Activated CD4-positive, alpha-beta T cell treated with anti-CD3 and anti-CD28 coated beads, Interleukin-2, amount 10 ng/mL, durations not matched to agents 24 days and 14 days (primary cell): ENCODE measurements at regions of chr3 and their contacts with region 1.

Region 1: GRCh38 chr3:134485718-134486576 is at the starts of genes ANAPC13 and CEP63:
- DNase-seq: peak; percentile 97
- H3K4me3 Mint-ChIP-seq: peak within 1 kb of the TSS; percentile 85
- H3K27ac Mint-ChIP-seq: peak within 1 kb of the TSS; percentile 98
- H3K4me1 Mint-ChIP-seq: peaks cover 38% of the 10 kb centered on the region
- H3K27me3 Mint-ChIP-seq: no peaks in the 10 kb centered on the region
- total RNA-seq, gene ANAPC13: 29.7 and 30.0 TPM in 2 replicates
- total RNA-seq, gene CEP63: 18.6 and 20.5 TPM in 2 replicates

Region 2: DNA sequence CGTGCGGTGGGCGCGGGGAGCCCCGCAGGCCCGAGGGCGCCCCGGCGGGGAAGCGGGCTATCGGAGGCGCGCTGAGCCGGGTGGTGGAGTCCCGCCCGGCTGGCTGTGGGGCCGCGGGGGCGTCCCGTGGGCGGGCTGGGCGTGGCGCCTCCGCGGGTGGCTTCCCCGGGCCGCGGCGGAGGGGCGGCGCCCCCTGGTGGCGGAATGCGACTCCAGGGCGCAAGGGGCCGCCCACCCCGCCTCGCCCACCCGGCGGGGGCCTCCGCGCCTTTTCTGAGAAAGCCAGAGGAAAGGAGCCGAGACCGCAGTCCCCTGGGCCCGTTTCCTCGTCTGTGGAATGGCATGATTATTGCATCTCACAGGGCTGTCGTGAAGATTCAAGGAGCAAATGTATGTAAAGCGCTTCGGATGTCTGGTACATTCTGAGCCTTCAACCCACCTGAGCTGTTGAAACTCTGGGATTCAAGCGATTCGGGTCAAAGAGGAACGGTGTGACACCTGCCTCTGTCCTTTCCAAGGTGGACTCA is 558.3 kb before region 1 on chr3:
- intact Hi-C with region 1: loop called (anchors 10 kb)
- DNase-seq: peak; percentile 92
- H3K4me3 Mint-ChIP-seq: peak overlapping the region; percentile 64
- H3K27ac Mint-ChIP-seq: no peak overlapping the region
- H3K4me1 Mint-ChIP-seq: peaks cover 5% of the 10 kb centered on the region
- H3K27me3 Mint-ChIP-seq: peaks cover 33% of the 10 kb centered on the region

Region 3: GRCh38 chr3:134250717-134251220 is 235.2 kb before region 1 on chr3 and contains the start of gene RYK:
- intact Hi-C with region 1: loop called (anchors 1 kb)
- DNase-seq: peak; percentile 93
- H3K4me3 Mint-ChIP-seq: peak within 1 kb of the TSS; percentile 90
- H3K27ac Mint-ChIP-seq: peak within 1 kb of the TSS; percentile 93
- H3K4me1 Mint-ChIP-seq: peaks cover 29% of the 10 kb centered on the region
- H3K27me3 Mint-ChIP-seq: peaks cover 50% of the 10 kb centered on the region
- total RNA-seq, gene RYK: 17.2 and 19.9 TPM in 2 replicates

Region 4: DNA sequence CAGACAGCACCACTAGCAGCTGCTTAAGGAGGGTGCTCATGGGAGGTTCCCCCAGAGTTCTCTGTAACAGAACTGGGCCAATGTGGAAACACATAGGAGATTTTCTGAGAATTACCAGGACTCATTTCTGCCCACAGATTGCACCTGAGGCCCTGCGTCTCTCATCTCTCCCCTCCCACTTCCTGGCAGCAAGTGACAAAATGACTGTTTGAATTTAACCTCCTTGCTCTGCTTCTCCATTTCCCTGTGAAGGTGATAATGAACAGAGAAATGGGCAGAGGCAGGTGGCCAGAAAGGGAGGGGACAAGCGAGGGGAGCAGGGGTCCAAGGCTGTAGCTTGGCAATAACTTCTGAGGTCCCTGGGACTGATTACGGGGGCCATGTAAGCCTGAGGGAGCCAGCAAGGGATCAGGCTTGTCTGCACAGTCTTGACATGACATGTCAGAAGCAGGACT is 317.1 kb after region 1 on chr3:
- intact Hi-C with region 1: loop called (anchors 10 kb)
- DNase-seq: peak; percentile 85
- H3K4me3 Mint-ChIP-seq: peak overlapping the region; percentile 32
- H3K27ac Mint-ChIP-seq: peak overlapping the region; percentile 30
- H3K4me1 Mint-ChIP-seq: peaks cover 28% of the 10 kb centered on the region
- H3K27me3 Mint-ChIP-seq: peaks cover 38% of the 10 kb centered on the region